Activated B cell treated with CpG ODN at 0.5 μM for 24 hours (primary cell): ENCODE measurements at regions of chr5 and their contacts with region 1.

Region 1: GRCh38 chr5:36728697-36729543 is 122.5 kb downstream of the SLC1A3 start:
- DNase-seq: no peak
- ATAC-seq: no peak
- H3K4me3 Mint-ChIP-seq: no peak overlapping the region
- H3K27ac Mint-ChIP-seq: no peak overlapping the region
- H3K4me1 Mint-ChIP-seq: peaks cover 24% of the 10 kb centered on the region
- H3K27me3 Mint-ChIP-seq: peaks cover 3% of the 10 kb centered on the region
- CTCF ChIP-seq: peak; percentile 66

Region 2: GRCh38 chr5:36151434-36152323 is 577.2 kb before region 1 on chr5 and contains the starts of genes LMBRD2 and SKP2:
- CTCF ChIA-PET with region 1: no interaction called
- POLR2A ChIA-PET with region 1: no interaction called
- intact Hi-C with region 1: loop called (anchors 5 kb)
- DNase-seq: peak; percentile 95
- ATAC-seq: peak; percentile 97
- H3K4me3 Mint-ChIP-seq: peak within 1 kb of the TSS; percentile 96
- H3K27ac Mint-ChIP-seq: peak within 1 kb of the TSS; percentile 85
- H3K4me1 Mint-ChIP-seq: peaks cover 40% of the 10 kb centered on the region
- H3K27me3 Mint-ChIP-seq: no peaks in the 10 kb centered on the region
- CTCF ChIP-seq: no peak
- total RNA-seq, gene LMBRD2: 6.4 and 8.9 TPM in 2 replicates
- total RNA-seq, gene SKP2: 18.5 TPM in 2 replicates

Region 3: GRCh38 chr5:36264202-36264760 is 464.6 kb before region 1 on chr5:
- CTCF ChIA-PET with region 1: no interaction called
- POLR2A ChIA-PET with region 1: interaction called, 10 read pairs
- intact Hi-C with region 1: no loop called
- DNase-seq: no peak
- ATAC-seq: no peak
- H3K4me3 Mint-ChIP-seq: no peak overlapping the region
- H3K27ac Mint-ChIP-seq: no peak overlapping the region
- H3K4me1 Mint-ChIP-seq: no peaks in the 10 kb centered on the region
- H3K27me3 Mint-ChIP-seq: peaks cover 5% of the 10 kb centered on the region
- CTCF ChIP-seq: no peak

Region 4: DNA sequence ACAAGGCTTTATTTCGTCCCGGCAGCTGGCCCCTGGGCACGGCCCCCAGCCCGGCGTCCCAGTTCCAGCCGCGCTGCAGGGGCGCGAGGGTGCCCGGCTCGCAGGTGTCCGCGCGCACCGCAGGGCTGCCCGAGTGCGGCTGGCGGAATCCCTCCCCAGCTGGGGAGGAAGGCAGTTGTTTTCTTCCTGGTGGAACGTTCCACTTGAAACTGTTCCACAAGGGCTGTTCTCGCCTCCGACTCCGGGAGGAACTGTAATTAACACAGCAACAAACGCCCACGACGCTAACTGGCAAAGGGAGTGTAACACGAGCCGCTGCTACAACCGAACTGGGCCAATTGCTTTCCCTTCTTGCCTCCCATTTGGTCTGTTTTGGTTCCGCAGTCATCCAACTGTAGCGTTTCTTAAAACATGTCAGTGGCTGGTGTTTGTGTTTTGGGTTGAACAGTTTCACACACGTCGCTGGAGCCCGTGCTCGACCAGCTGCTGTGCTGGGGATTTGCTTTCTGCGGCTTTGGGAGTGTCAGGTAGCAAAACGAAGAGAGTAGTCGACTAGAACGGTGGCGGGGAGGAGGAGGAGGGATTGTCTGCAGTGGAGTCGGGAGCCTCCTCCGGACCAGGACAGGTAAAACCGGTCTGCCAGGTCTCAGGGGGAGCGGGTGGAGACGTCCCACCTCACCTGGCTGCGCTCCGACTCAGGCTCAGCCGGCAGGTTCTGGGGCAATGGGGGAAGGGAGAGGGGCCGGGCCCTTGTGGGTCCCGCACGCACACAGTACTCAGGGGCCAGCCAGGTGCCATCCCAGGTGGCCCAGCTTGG is 16.1 kb after region 1 on chr5:
- CTCF ChIA-PET with region 1: interaction called, 21 read pairs
- POLR2A ChIA-PET with region 1: interaction called, 3 read pairs
- intact Hi-C with region 1: loop called (anchors 1 kb)
- DNase-seq: peak; percentile 48
- ATAC-seq: peak; percentile 74
- H3K4me3 Mint-ChIP-seq: peak overlapping the region; percentile 89
- H3K27ac Mint-ChIP-seq: peak overlapping the region; percentile 22
- H3K4me1 Mint-ChIP-seq: peaks cover 21% of the 10 kb centered on the region
- H3K27me3 Mint-ChIP-seq: peaks cover 10% of the 10 kb centered on the region
- CTCF ChIP-seq: no peak

Region 5: GRCh38 chr5:36875790-36876388 is 147.0 kb after region 1 on chr5:
- CTCF ChIA-PET with region 1: interaction called, 11 read pairs
- POLR2A ChIA-PET with region 1: interaction called, 45 read pairs
- intact Hi-C with region 1: loop called (anchors 1 kb)
- DNase-seq: peak; percentile 75
- ATAC-seq: peak; percentile 69
- H3K4me3 Mint-ChIP-seq: peak overlapping the region; percentile 93
- H3K27ac Mint-ChIP-seq: peak overlapping the region; percentile 93
- H3K4me1 Mint-ChIP-seq: peaks cover 46% of the 10 kb centered on the region
- H3K27me3 Mint-ChIP-seq: no peaks in the 10 kb centered on the region
- CTCF ChIP-seq: no peak

Region 6: GRCh38 chr5:37248970-37249686 is 520.2 kb after region 1 on chr5 and contains the start of gene CPLANE1:
- CTCF ChIA-PET with region 1: no interaction called
- POLR2A ChIA-PET with region 1: no interaction called
- intact Hi-C with region 1: loop called (anchors 10 kb)
- DNase-seq: peak; percentile 72
- ATAC-seq: peak; percentile 89
- H3K4me3 Mint-ChIP-seq: peak within 1 kb of the TSS; percentile 91
- H3K27ac Mint-ChIP-seq: peak within 1 kb of the TSS; percentile 76
- H3K4me1 Mint-ChIP-seq: peaks cover 8% of the 10 kb centered on the region
- H3K27me3 Mint-ChIP-seq: no peaks in the 10 kb centered on the region
- CTCF ChIP-seq: no peak
- total RNA-seq, gene CPLANE1: 8.8 and 11.7 TPM in 2 replicates